ENCODE measurements at regions of chr17 and their contacts with region 1.

Region 1: DNA sequence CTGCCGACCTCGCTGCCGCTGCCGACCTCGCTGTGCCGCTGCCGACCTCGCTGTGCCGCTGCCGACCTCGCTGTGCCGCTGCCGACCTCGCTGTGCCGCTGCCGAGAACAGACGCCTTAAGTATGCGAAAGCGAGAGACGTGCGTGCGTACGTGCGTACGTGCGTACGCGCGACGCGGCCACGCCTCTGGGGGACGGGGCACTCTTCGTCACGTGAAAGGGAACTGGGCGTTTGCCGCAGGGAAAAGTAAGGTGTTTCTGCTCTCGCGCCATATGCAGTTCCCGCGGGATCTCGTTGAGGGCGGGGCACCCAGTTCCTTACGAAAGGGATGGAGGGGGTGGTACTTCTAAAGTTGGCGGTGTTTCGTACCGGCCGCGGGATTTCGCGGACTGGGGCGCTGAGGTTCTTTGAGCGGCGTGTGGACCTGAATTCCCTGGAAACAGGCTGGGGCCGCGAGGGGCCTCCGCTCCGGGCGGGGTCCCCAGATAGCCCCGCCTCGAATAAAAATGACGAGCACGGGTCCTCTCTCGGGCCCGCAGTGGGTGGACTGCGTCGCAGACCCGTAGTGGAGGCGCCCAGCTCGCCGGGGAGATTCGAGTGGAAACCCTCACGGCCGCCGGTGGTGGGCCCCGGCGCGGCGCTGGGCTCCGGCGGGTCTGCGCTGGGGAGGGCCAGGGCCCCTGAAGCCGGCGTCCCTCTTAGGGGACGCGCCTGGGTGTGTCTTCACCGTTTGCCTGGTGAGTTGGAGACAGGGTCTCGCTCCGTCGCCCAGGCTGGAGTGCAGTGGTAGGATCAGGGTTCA is at the start of gene EIF4A3:
- DNase-seq: peak; percentile 100
- total RNA-seq, gene EIF4A3: 40.9 TPM

Region 2: DNA sequence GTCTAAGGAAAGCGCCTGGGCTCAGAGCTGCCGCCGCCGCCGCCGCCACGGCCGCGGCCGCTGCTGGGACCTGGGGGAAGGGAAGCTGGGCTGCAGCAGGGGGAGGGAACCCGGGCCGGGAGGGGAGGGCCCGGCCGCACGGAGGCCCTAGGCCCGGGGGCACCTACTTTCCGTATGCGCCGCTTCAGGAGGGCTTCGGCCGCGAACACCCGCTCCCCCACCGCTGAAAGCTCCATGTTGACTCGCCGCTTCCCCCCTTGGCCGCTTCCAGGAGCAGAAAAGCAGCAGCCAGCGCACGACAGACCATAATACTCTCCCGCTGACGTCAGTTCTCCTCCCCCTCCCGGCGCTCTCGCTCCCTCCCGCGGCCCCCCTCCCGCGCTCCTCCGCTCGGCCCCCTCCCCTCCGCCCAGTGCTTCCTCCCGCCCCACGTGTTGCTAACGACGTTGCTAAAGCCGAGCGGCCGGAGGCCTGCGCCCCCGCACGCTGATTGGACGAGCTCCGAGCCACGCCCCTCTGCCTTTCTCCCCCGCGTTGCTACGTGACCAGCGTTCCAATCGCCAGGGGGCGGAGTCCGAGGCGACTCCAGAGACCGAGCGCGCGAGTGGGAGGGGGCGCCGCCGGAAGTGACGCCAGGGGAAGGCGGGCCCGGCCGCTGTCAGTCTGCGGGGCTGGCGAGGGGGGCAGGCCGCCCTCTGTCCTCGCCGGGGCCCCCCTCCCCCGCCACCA is 350.3 kb before region 1 on chr17 and contains the start of gene CBX8:
- intact Hi-C with region 1: loop called (anchors 5 kb)
- DNase-seq: peak; percentile 100
- total RNA-seq, gene CBX8: 5.7 TPM

Region 3: DNA sequence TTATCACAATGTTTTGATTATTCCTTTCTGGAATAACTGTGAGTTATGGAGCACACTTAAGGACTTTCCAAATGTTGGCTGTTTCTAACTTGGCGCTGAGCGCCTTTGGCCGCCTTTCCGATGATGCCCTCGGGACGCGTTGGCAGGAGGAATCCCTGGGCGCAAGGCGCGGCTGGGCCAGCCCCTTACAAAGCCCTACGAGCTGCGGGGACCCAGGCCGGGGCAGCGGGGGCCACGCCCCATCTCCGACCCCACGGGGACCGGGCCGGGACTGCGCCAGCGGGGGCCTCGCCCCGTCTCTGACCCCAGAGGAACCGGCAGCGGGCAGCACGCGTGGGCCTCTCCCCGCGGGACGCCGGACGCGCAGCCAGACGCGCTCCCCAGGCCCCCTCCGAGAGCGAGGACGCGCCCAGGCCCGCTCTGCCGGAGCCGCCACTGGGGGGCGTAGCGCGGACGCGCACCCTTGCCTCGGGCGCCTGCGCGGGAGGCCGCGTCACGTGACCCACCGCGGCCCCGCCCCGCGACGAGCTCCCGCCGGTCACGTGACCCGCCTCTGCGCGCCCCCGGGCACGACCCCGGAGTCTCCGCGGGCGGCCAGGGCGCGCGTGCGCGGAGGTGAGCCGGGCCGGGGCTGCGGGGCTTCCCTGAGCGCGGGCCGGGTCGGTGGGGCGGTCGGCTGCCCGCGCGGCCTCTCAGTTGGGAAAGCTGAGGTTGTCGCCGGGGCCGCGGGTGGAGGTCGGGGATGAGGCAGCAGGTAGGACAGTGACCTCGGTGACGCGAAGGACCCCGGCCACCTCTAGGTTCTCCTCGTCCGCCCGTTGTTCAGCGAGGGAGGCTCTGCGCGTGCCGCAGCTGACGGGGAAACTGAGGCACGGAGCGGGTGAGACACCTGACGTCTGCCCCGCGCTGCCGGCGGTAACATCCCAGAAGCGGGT is 46.0 kb before region 1 on chr17 and contains the start of gene GAA:
- intact Hi-C with region 1: loop called (anchors 2 kb)
- DNase-seq: peak; percentile 94
- total RNA-seq, gene GAA: 47.0 TPM

Region 4: GRCh38 chr17:80263253-80264204 is 116.3 kb after region 1 on chr17:
- intact Hi-C with region 1: loop called (anchors 2 kb)
- DNase-seq: peak; percentile 93